A673 (cell line): ENCODE measurements at regions of chr1 and their contacts with region 1.

Region 1: GRCh38 chr1:77164434-77164944 is 54.7 kb downstream of the PIGK start:
- DNase-seq: no peak
- H3K4me3 ChIP-seq: no peak overlapping the region
- H3K27ac ChIP-seq: no peak overlapping the region
- H3K4me1 ChIP-seq: no peaks in the 10 kb centered on the region
- H3K27me3 ChIP-seq: no peaks in the 10 kb centered on the region
- CTCF ChIP-seq: no peak

Region 2: GRCh38 chr1:75615613-75616435 is 1548.7 kb before region 1 on chr1:
- CTCF ChIA-PET with region 1: no interaction called
- POLR2A ChIA-PET with region 1: interaction called, 14 read pairs
- intact Hi-C with region 1: no loop called
- DNase-seq: peak; percentile 56
- H3K4me3 ChIP-seq: peak overlapping the region; percentile 61
- H3K27ac ChIP-seq: no peak overlapping the region
- H3K4me1 ChIP-seq: no peaks in the 10 kb centered on the region
- H3K27me3 ChIP-seq: peaks cover 42% of the 10 kb centered on the region
- CTCF ChIP-seq: no peak

Region 3: GRCh38 chr1:77188770-77189169 is 24.3 kb after region 1 on chr1:
- CTCF ChIA-PET with region 1: no interaction called
- POLR2A ChIA-PET with region 1: no interaction called
- intact Hi-C with region 1: loop called (anchors 2 kb)
- DNase-seq: no peak
- H3K4me3 ChIP-seq: no peak overlapping the region
- H3K27ac ChIP-seq: no peak overlapping the region
- H3K4me1 ChIP-seq: no peaks in the 10 kb centered on the region
- H3K27me3 ChIP-seq: no peaks in the 10 kb centered on the region
- CTCF ChIP-seq: no peak